ENCODE measurements at regions of chr17 and their contacts with region 1.

Region 1: GRCh38 chr17:7306911-7307686 is at the start of gene EIF5A:
- DNase-seq: peak; percentile 100
- H3K4me3 ChIP-seq: peak within 1 kb of the TSS; percentile 62
- H3K4me3 Mint-ChIP-seq: peak within 1 kb of the TSS; percentile 92 to 99 (median 95)
- H3K27ac ChIP-seq: peak within 1 kb of the TSS; percentile 98
- H3K27ac Mint-ChIP-seq: peak within 1 kb of the TSS; percentile 97 to 99 (median 99)
- H3K4me1 ChIP-seq: peaks cover 30% of the 10 kb centered on the region
- H3K4me1 Mint-ChIP-seq: peaks cover 36 to 39% (median 38%) of the 10 kb centered on the region in 3 donors
- H3K27me3 ChIP-seq: no peaks in the 10 kb centered on the region
- H3K27me3 Mint-ChIP-seq: peaks cover 0 to 5% of the 10 kb centered on the region in 2 donors
- total RNA-seq, gene EIF5A: 1,533 to 1,595 TPM

Region 2: GRCh38 chr17:7454980-7455379 is 147.9 kb after region 1 on chr17:
- CTCF ChIA-PET with region 1: no interaction called
- POLR2A ChIA-PET with region 1: interaction called, 10 read pairs
- DNase-seq: no peak
- H3K4me3 ChIP-seq: peak overlapping the region; percentile 95
- H3K4me3 Mint-ChIP-seq: peak overlapping the region; percentile 86 to 100 (median 98)
- H3K27ac ChIP-seq: peak overlapping the region; percentile 72
- H3K27ac Mint-ChIP-seq: peak overlapping the region; percentile 50 to 99 (median 95)
- H3K4me1 ChIP-seq: peaks cover 15% of the 10 kb centered on the region
- H3K4me1 Mint-ChIP-seq: peaks cover 18 to 23% (median 22%) of the 10 kb centered on the region in 3 donors
- H3K27me3 ChIP-seq: no peaks in the 10 kb centered on the region
- H3K27me3 Mint-ChIP-seq: no peaks in the 10 kb centered on the region

Measured in CD8-positive, alpha-beta memory T cell (primary cell).